CD8-positive, alpha-beta T cell (primary cell): ENCODE measurements at regions of chrX and their contacts with region 1.

Region 1: GRCh38 chrX:131841496-131842410 is 181.3 kb upstream of the STK26 start:
- DNase-seq: peak in 5 of 9 experiments; percentile 13 to 68 (median 55)
- ATAC-seq: peak; percentile 46
- H3K4me3 ChIP-seq: no peak overlapping the region
- H3K4me3 Mint-ChIP-seq: no peak overlapping the region
- H3K27ac ChIP-seq: no peak overlapping the region
- H3K27ac Mint-ChIP-seq: no peak overlapping the region
- H3K4me1 ChIP-seq: no peaks in the 10 kb centered on the region
- H3K4me1 Mint-ChIP-seq: no peaks in the 10 kb centered on the region
- H3K27me3 ChIP-seq: no peaks in the 10 kb centered on the region
- H3K27me3 Mint-ChIP-seq: no peaks in the 10 kb centered on the region
- CTCF ChIP-seq: peak; percentile 69

Region 2: DNA sequence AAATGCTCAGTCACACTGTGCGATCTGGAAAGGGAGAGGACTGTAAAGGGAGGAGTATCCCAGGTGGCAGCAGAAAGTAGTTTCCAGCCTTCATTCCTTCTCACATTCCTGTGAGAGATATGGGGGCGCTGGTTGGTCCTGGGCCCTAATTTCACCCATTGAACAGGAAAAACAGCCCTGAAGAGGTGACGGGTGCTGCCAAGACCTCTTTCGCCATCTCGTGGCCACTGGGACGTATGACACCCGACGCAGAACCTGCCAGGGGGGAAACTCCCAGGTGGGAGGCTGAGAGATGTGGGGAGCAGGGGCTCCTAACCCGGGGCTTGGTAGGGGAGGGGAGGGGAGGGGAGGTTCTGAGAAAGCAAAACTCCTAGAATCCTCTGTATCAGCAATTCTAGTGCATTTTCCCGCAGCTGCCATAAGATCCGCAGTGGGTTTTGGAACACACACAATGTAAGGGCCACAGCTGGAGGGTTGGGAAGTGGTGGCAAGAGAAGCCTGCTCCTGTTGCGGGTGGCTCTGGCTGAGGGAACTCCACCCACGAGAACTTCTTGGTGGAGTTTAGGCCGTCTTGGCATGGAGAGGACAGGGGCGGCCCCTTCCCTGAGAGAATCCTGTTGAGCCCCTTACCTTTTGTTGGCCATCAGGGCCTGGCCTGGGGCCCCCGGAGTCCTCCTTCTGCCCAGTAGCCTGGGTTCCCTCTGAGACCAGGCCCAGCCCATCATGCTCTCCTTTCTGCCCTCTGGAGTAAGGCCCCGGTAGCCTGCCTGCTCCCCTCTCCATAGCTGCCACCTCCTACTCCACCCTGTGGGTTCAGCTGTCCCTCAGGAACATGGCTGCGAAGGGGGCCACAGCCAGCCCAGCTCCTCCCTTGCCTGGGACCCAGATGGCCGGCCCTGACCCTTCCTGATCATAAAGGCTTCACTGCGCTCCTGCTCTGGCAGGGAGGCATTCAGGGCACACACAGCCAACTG is 163.8 kb before region 1 on chrX:
- CTCF ChIA-PET with region 1: no interaction called
- POLR2A ChIA-PET with region 1: no interaction called
- intact Hi-C with region 1: loop called in 1 of 2 experiments (anchors 2 kb)
- DNase-seq: peak in 7 of 9 experiments; percentile 0 to 61 (median 44)
- ATAC-seq: peak; percentile 42
- H3K4me3 ChIP-seq: no peak overlapping the region
- H3K4me3 Mint-ChIP-seq: no peak overlapping the region
- H3K27ac ChIP-seq: no peak overlapping the region
- H3K27ac Mint-ChIP-seq: no peak overlapping the region
- H3K4me1 ChIP-seq: no peaks in the 10 kb centered on the region
- H3K4me1 Mint-ChIP-seq: no peaks in the 10 kb centered on the region
- H3K27me3 ChIP-seq: no peaks in the 10 kb centered on the region
- H3K27me3 Mint-ChIP-seq: no peaks in the 10 kb centered on the region
- CTCF ChIP-seq: no peak

Region 3: DNA sequence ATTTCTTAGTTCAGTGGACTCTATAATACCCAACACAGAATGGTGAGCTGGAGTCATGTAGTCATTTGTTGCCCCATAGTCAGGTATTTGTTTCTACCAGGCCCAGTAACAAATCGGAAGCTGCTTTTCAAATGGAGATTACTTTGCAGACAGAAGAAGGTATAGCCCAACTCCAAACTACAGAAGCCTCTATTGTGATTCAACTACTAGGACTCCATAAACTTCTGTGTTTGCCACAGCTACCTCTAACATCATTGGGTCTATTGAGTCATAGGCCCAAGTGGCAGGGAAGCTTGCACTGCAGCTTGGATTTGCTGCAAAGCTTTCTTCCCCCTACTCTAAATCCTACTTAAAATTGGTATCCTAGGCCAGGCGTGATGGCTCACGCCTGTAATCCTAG is 32.5 kb after region 1 on chrX:
- CTCF ChIA-PET with region 1: no interaction called
- POLR2A ChIA-PET with region 1: no interaction called
- intact Hi-C with region 1: no loop called
- DNase-seq: no peak
- ATAC-seq: no peak
- H3K4me3 ChIP-seq: no peak overlapping the region
- H3K4me3 Mint-ChIP-seq: no peak overlapping the region
- H3K27ac ChIP-seq: no peak overlapping the region
- H3K27ac Mint-ChIP-seq: no peak overlapping the region
- H3K4me1 ChIP-seq: no peaks in the 10 kb centered on the region
- H3K4me1 Mint-ChIP-seq: no peaks in the 10 kb centered on the region
- H3K27me3 ChIP-seq: no peaks in the 10 kb centered on the region
- H3K27me3 Mint-ChIP-seq: no peaks in the 10 kb centered on the region
- CTCF ChIP-seq: no peak

Region 4: GRCh38 chrX:132022967-132023895 is 181.5 kb after region 1 on chrX and contains the start of gene STK26:
- CTCF ChIA-PET with region 1: interaction called, 3 read pairs
- POLR2A ChIA-PET with region 1: no interaction called
- intact Hi-C with region 1: loop called in 1 of 2 experiments (anchors 2 kb)
- DNase-seq: peak; percentile 51 to 88 (median 75)
- ATAC-seq: peak; percentile 87
- H3K4me3 ChIP-seq: peak within 1 kb of the TSS; percentile 84 to 87
- H3K4me3 Mint-ChIP-seq: peak within 1 kb of the TSS; percentile 93
- H3K27ac ChIP-seq: peak within 1 kb of the TSS; percentile 79 to 80
- H3K27ac Mint-ChIP-seq: peak within 1 kb of the TSS; percentile 93
- H3K4me1 ChIP-seq: peaks cover 35% of the 10 kb centered on the region
- H3K4me1 Mint-ChIP-seq: peaks cover 40% of the 10 kb centered on the region
- H3K27me3 ChIP-seq: no peaks in the 10 kb centered on the region
- H3K27me3 Mint-ChIP-seq: no peaks in the 10 kb centered on the region
- CTCF ChIP-seq: no peak
- total RNA-seq, gene STK26: 33.8 to 34.1 TPM

Region 5: GRCh38 chrX:132071260-132071659 is 229.5 kb after region 1 on chrX:
- CTCF ChIA-PET with region 1: interaction called, 6 read pairs
- POLR2A ChIA-PET with region 1: no interaction called
- intact Hi-C with region 1: loop called (anchors 1 to 5 kb)
- DNase-seq: peak in 2 of 9 experiments; percentile 3 to 17
- ATAC-seq: no peak
- H3K4me3 ChIP-seq: no peak overlapping the region
- H3K4me3 Mint-ChIP-seq: no peak overlapping the region
- H3K27ac ChIP-seq: no peak overlapping the region
- H3K27ac Mint-ChIP-seq: no peak overlapping the region
- H3K4me1 ChIP-seq: no peaks in the 10 kb centered on the region
- H3K4me1 Mint-ChIP-seq: peaks cover under 1% of the 10 kb centered on the region
- H3K27me3 ChIP-seq: no peaks in the 10 kb centered on the region
- H3K27me3 Mint-ChIP-seq: no peaks in the 10 kb centered on the region
- CTCF ChIP-seq: peak; percentile 34

Region 6: GRCh38 chrX:132615391-132616131 is 773.8 kb after region 1 on chrX:
- CTCF ChIA-PET with region 1: interaction called, 6 read pairs
- POLR2A ChIA-PET with region 1: no interaction called
- intact Hi-C with region 1: loop called (anchors 5 kb)
- DNase-seq: peak in 8 of 9 experiments; percentile 21 to 64 (median 41)
- ATAC-seq: no peak
- H3K4me3 ChIP-seq: no peak overlapping the region
- H3K4me3 Mint-ChIP-seq: no peak overlapping the region
- H3K27ac ChIP-seq: no peak overlapping the region
- H3K27ac Mint-ChIP-seq: no peak overlapping the region
- H3K4me1 ChIP-seq: no peaks in the 10 kb centered on the region
- H3K4me1 Mint-ChIP-seq: no peaks in the 10 kb centered on the region
- H3K27me3 ChIP-seq: no peaks in the 10 kb centered on the region
- H3K27me3 Mint-ChIP-seq: no peaks in the 10 kb centered on the region
- CTCF ChIP-seq: peak; percentile 15

Region 7: GRCh38 chrX:132631579-132632232 is 790.0 kb after region 1 on chrX:
- CTCF ChIA-PET with region 1: interaction called, 5 read pairs
- POLR2A ChIA-PET with region 1: no interaction called
- intact Hi-C with region 1: loop called (anchors 1 to 5 kb)
- DNase-seq: peak in 2 of 9 experiments; percentile 40 to 56
- ATAC-seq: peak; percentile 48
- H3K4me3 ChIP-seq: no peak overlapping the region
- H3K4me3 Mint-ChIP-seq: no peak overlapping the region
- H3K27ac ChIP-seq: no peak overlapping the region
- H3K27ac Mint-ChIP-seq: no peak overlapping the region
- H3K4me1 ChIP-seq: no peaks in the 10 kb centered on the region
- H3K4me1 Mint-ChIP-seq: no peaks in the 10 kb centered on the region
- H3K27me3 ChIP-seq: no peaks in the 10 kb centered on the region
- H3K27me3 Mint-ChIP-seq: peaks cover 2% of the 10 kb centered on the region
- CTCF ChIP-seq: peak; percentile 28